Right ventricle myocardium superior (tissue), 1 donor: ENCODE measurements at regions of chr12 and their contacts with region 1.

Region 1: GRCh38 chr12:94149119-94149780 is 873 bp downstream of the PLXNC1 start:
- DNase-seq: no peak
- ATAC-seq: peak; percentile 54

Region 2: DNA sequence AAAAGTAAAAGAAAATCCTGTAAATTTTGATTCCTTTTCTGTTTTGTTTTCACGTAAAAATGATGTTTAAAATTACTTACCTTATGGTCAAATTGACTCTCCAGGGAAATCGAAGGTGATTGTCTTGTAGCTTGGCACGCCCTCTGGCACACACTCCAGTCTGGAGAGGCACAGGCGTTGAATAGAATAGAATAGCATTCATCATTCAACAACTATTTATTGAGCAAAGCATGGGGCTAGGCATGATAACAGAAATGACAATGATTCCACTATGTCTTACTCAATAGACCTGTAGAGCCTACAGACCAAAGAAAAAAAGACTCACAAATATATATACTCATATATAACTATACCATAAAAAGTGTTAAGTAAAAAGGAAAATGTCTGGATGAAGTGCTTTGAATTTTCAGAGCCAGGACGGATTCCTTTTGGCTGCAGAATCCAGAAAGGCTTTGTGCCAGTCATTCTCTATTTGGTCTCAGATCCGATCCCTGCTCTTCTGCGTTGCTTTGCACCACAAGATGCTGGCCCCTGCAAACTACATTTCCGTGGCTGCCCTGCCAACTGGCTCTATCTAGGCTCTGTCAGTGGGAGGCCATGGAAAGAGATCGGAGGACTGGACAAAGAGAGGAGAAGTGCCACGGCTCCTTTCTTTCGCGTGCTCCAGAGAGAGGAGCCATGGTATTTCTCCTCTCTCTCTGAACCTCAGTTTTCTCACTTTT is 240.2 kb before region 1 on chr12:
- intact Hi-C with region 1: no loop called
- DNase-seq: peak; percentile 55
- ATAC-seq: peak; percentile 84

Region 3: DNA sequence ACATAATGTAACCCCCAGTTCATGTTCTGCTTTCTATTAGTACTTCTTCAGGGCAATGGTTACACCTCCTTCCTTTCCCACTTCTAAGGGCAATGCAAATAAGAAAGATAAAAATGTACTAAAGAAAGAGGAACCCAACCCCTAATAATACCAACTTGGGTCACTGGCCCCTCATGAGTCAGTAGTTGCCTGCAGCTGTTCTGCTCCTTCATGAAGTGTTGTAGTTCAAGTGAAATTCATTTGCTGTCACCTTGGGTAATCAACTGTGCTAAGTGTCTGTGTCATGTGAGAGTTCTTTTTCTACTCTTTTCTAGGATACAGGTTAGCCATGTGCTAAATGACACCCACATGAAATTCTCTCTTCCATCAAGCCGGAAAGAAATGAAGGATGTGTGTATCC is 90.9 kb after region 1 on chr12:
- intact Hi-C with region 1: no loop called
- DNase-seq: no peak
- ATAC-seq: no peak

Region 4: DNA sequence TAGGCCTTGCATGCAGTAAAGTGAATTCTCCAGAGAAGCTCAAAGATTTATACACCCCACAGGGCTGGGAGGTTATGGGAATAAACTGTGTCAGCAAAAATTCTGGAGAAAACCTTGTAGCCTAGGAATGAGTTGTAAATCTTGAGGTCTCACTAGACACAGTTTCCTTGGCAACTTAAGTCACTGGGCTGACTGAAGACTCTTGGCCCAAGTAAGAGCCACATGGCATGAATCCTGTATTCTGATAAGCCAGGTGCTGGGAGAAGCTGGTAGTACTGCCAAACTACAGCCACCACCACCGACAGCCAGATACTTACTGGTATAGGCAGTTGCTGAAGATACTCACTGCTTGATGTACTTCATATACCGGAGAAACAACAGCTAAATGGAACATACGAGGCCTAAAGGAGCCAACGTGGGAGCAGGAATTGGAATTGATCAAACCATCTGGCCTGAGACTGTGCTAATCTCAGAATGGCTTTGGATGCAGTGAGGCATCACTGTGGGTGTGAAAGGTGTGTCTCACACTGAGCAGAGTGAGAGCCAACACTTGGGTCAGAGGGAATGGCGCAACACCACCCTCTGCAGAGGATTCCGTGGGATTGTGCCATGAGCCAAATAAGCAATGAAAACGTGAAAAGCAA is 603.9 kb after region 1 on chr12:
- intact Hi-C with region 1: loop called (anchors 10 kb)
- DNase-seq: no peak
- ATAC-seq: no peak